PC-3 (cell line): ENCODE measurements at regions of chr15 and their contacts with region 1.

Region 1: DNA sequence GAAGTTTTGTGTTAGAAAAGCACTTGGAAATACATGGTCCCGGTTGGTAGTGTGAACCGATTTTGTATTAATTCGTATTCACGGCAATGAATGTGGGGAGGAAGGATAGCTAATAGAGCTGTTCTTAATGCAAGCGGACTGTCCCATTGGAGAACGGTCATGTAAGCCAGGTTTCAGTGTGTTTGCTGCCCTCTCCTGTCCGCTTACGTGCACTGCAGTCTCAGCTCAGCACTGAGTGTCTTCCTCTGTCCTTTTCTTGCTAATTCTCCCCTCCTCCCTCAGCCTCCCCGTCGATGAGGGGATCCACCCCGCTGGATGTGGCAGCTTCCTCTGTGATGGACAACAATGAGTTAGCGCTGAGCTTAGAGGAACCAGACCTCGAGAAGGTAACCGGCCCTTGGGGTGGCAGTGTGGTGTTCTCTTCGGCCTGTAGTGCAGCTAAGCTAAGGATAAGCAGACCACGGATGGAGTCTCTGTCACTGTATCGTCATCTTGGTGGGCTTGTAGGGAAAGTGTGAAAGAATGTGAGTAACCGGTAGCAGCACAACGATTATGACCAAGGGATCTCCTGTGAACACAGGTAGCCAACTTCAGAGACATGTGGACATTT is 267.5 kb upstream of the CHRM5 start:
- DNase-seq: peak; percentile 84
- ATAC-seq: peak; percentile 97
- H3K4me3 ChIP-seq: no peak overlapping the region
- H3K27ac ChIP-seq: no peak overlapping the region
- H3K4me1 ChIP-seq: no peaks in the 10 kb centered on the region
- H3K27me3 ChIP-seq: peaks cover 30% of the 10 kb centered on the region
- CTCF ChIP-seq: peak; percentile 90

Region 2: GRCh38 chr15:33490703-33491102 is 210.1 kb before region 1 on chr15:
- CTCF ChIA-PET with region 1: no interaction called
- POLR2A ChIA-PET with region 1: no interaction called
- intact Hi-C with region 1: no loop called
- DNase-seq: no peak
- ATAC-seq: no peak
- H3K4me3 ChIP-seq: no peak overlapping the region
- H3K27ac ChIP-seq: no peak overlapping the region
- H3K4me1 ChIP-seq: no peaks in the 10 kb centered on the region
- H3K27me3 ChIP-seq: peaks cover 84% of the 10 kb centered on the region
- CTCF ChIP-seq: no peak

Region 3: GRCh38 chr15:33729653-33730052 is 28.9 kb after region 1 on chr15:
- CTCF ChIA-PET with region 1: interaction called, 8 read pairs
- POLR2A ChIA-PET with region 1: no interaction called
- intact Hi-C with region 1: loop called (anchors 2 kb)
- DNase-seq: peak; percentile 79
- ATAC-seq: peak; percentile 71
- H3K4me3 ChIP-seq: no peak overlapping the region
- H3K27ac ChIP-seq: no peak overlapping the region
- H3K4me1 ChIP-seq: no peaks in the 10 kb centered on the region
- H3K27me3 ChIP-seq: no peaks in the 10 kb centered on the region
- CTCF ChIP-seq: peak; percentile 72

Region 4: GRCh38 chr15:33810073-33810595 is 109.3 kb after region 1 on chr15:
- CTCF ChIA-PET with region 1: no interaction called
- POLR2A ChIA-PET with region 1: no interaction called
- intact Hi-C with region 1: no loop called
- DNase-seq: no peak
- ATAC-seq: no peak
- H3K4me3 ChIP-seq: no peak overlapping the region
- H3K27ac ChIP-seq: no peak overlapping the region
- H3K4me1 ChIP-seq: no peaks in the 10 kb centered on the region
- H3K27me3 ChIP-seq: peaks cover 86% of the 10 kb centered on the region
- CTCF ChIP-seq: 0 out of 2 replicates have a peak, but pooled peaks have one; percentile 11